ENCODE measurements at regions of chr4 and their contacts with region 1.

Region 1: GRCh38 chr4:6709230-6710114 is at the start of gene MRFAP1L1:
- DNase-seq: peak; percentile 87 to 95
- H3K4me3 ChIP-seq: peak within 1 kb of the TSS; percentile 96
- H3K27ac ChIP-seq: peak within 1 kb of the TSS; percentile 50
- H3K4me1 ChIP-seq: peaks cover 18% of the 10 kb centered on the region
- H3K27me3 ChIP-seq: no peaks in the 10 kb centered on the region
- CTCF ChIP-seq: no peak
- total RNA-seq, gene MRFAP1L1: 51.4 and 52.1 TPM in 2 replicates

Region 2: GRCh38 chr4:6658597-6659075 is 50.8 kb before region 1 on chr4:
- CTCF ChIA-PET with region 1: no interaction called
- POLR2A ChIA-PET with region 1: no interaction called
- intact Hi-C with region 1: no loop called
- DNase-seq: no peak
- H3K4me3 ChIP-seq: no peak overlapping the region
- H3K27ac ChIP-seq: no peak overlapping the region
- H3K4me1 ChIP-seq: no peaks in the 10 kb centered on the region
- H3K27me3 ChIP-seq: no peaks in the 10 kb centered on the region
- CTCF ChIP-seq: no peak

Region 3: GRCh38 chr4:6695660-6696630 is 13.5 kb before region 1 on chr4:
- CTCF ChIA-PET with region 1: interaction called, 3 read pairs
- POLR2A ChIA-PET with region 1: interaction called, 6 read pairs
- intact Hi-C with region 1: loop called (anchors 1 kb)
- DNase-seq: peak; percentile 84 to 95
- H3K4me3 ChIP-seq: peak overlapping the region; percentile 86
- H3K27ac ChIP-seq: peak overlapping the region; percentile 100
- H3K4me1 ChIP-seq: peaks cover 37% of the 10 kb centered on the region
- H3K27me3 ChIP-seq: no peaks in the 10 kb centered on the region
- CTCF ChIP-seq: no peak; the same call in 1 of the 2 replicates

Region 4: GRCh38 chr4:7004331-7004730 is 294.9 kb after region 1 on chr4:
- CTCF ChIA-PET with region 1: no interaction called
- POLR2A ChIA-PET with region 1: no interaction called
- intact Hi-C with region 1: no loop called
- DNase-seq: no peak
- H3K4me3 ChIP-seq: no peak overlapping the region
- H3K27ac ChIP-seq: no peak overlapping the region
- H3K4me1 ChIP-seq: peaks cover 9% of the 10 kb centered on the region
- H3K27me3 ChIP-seq: no peaks in the 10 kb centered on the region
- CTCF ChIP-seq: no peak

Measured in PC-9 (cell line).